ENCODE measurements at regions of chr17 and their contacts with region 1.

Region 1: DNA sequence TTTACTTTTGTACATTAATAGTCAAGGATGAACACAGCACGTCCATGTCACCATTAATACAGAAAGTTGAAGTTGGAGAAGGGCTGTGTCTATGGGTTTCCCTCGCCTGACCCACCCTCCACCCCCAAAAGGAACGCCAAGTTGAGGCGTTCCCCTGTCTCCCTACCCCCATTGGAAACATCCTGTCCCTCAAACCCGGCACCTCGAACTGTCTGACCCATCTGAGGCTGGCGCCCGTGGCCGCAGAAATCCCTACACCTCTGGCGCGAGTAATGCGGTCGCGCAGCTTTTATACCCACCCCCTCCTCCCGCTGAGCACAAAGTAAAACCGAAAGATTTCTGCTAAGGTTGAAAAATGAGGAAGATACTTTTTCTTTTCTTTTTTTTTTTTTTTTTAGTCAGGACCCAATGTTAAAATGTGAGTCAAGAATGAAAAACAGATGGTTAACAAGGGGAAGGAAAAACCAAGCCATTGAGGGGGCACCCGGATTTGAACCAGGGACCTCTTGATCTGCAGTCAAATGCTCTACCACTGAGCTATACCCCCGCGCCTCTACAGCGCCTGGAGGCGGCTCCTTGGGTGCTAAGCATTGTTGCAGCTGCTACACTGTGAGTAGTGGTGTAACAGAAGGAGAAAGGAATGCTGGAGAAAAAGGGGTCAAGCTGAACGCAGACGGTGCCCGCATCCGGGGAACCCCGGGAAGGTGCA is 887 bp upstream of the LASP1 start:
- DNase-seq: peak; percentile 86
- H3K4me3 ChIP-seq: peak overlapping the region; percentile 89
- H3K27ac ChIP-seq: peak overlapping the region; percentile 85
- H3K4me1 ChIP-seq: peaks cover 16% of the 10 kb centered on the region
- H3K27me3 ChIP-seq: no peaks in the 10 kb centered on the region
- CTCF ChIP-seq: peak; percentile 22; the same call in 1 of the 2 replicates

Region 2: GRCh38 chr17:38402897-38403296 is 466.1 kb before region 1 on chr17:
- CTCF ChIA-PET with region 1: no interaction called
- POLR2A ChIA-PET with region 1: no interaction called
- intact Hi-C with region 1: no loop called
- DNase-seq: no peak
- H3K4me3 ChIP-seq: no peak overlapping the region
- H3K27ac ChIP-seq: no peak overlapping the region
- H3K4me1 ChIP-seq: no peaks in the 10 kb centered on the region
- H3K27me3 ChIP-seq: no peaks in the 10 kb centered on the region
- CTCF ChIP-seq: no peak

Region 3: GRCh38 chr17:38752119-38752929 is 116.6 kb before region 1 on chr17 and contains the start of gene PSMB3:
- CTCF ChIA-PET with region 1: no interaction called
- POLR2A ChIA-PET with region 1: no interaction called
- intact Hi-C with region 1: loop called (anchors 5 kb)
- DNase-seq: peak; percentile 98
- H3K4me3 ChIP-seq: peak within 1 kb of the TSS; percentile 81
- H3K27ac ChIP-seq: peak within 1 kb of the TSS; percentile 80
- H3K4me1 ChIP-seq: peaks cover 16% of the 10 kb centered on the region
- H3K27me3 ChIP-seq: no peaks in the 10 kb centered on the region
- CTCF ChIP-seq: no peak
- total RNA-seq, gene PSMB3: 217 and 232 TPM in 2 replicates

Region 4: GRCh38 chr17:38879878-38880682 is 11.1 kb after region 1 on chr17:
- CTCF ChIA-PET with region 1: no interaction called
- POLR2A ChIA-PET with region 1: no interaction called
- intact Hi-C with region 1: no loop called
- DNase-seq: peak; percentile 69
- H3K4me3 ChIP-seq: no peak overlapping the region
- H3K27ac ChIP-seq: peak overlapping the region; percentile 37
- H3K4me1 ChIP-seq: peaks cover 38% of the 10 kb centered on the region
- H3K27me3 ChIP-seq: no peaks in the 10 kb centered on the region
- CTCF ChIP-seq: no peak

Region 5: DNA sequence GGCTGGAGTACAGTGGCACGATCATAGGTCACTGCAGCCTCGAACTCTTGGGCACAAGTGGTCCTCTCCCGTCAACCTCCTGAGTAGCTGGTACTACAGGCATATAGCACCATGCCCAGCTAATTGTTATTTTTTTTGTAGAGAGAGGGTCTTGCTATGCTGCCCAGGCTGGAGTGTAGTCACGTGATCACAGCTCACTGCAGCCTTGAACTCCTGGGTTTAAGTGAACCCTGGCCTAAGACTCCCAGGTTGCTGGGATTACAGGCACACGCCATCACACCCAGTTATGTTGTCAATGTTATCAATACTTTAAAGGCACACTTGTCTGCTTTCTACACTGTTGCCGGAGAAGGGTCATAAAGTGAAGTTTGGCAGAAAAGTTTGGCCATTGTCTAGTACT is 34.4 kb after region 1 on chr17:
- CTCF ChIA-PET with region 1: interaction called, 13 read pairs
- POLR2A ChIA-PET with region 1: no interaction called
- intact Hi-C with region 1: no loop called
- DNase-seq: no peak
- H3K4me3 ChIP-seq: no peak overlapping the region
- H3K27ac ChIP-seq: no peak overlapping the region
- H3K4me1 ChIP-seq: no peaks in the 10 kb centered on the region
- H3K27me3 ChIP-seq: no peaks in the 10 kb centered on the region
- CTCF ChIP-seq: no peak

Measured in A673 (cell line).